Naive thymus-derived CD8-positive, alpha-beta T cell (primary cell): ENCODE measurements at regions of chr6 and their contacts with region 1.

Region 1: GRCh38 chr6:2988426-2989331 is 11.0 kb upstream of the NQO2 start:
- DNase-seq: peak; percentile 67 to 88 (median 80)
- ATAC-seq: peak; percentile 73
- H3K4me3 Mint-ChIP-seq: peak overlapping the region; percentile 82 to 99 (median 96)
- H3K27ac Mint-ChIP-seq: peak overlapping the region; percentile 98 to 100 (median 100)
- H3K4me1 Mint-ChIP-seq: peaks cover 14 to 31% (median 28%) of the 10 kb centered on the region in 4 donors
- H3K27me3 Mint-ChIP-seq: no peaks in the 10 kb centered on the region

Region 2: DNA sequence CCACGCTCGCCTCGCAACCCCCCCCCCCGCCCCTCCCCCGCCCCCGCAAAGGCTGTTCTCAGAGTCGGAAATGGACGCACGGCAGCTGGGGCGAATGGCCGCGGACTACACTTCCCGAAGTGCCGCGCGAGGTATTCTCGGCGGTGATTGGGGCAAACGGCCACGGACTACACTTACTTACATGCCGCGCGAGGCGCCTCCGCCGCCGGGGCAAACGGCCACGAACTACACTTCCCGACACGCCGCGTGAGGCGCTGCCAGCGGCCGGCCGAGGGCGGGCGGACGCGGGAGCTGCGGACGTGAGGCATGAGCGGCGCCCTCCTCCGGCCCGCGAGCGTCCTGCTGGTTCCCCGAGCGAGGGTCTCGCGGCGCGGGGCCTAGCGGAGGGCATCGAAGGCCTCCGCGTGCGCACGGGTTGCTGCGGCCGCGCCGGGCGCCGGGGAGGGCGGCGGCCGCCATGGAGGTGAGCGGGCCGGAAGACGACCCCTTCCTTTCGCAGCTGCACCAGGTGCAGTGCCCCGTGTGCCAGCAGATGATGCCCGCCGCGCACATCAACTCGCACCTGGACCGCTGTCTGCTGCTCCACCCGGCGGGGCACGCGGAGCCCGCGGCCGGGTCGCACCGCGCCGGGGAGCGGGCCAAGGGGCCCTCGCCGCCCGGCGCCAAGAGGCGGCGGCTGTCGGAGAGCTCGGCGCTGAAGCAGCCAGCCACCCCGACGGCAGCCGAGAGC is 223.3 kb before region 1 on chr6 and contains the start of gene WRNIP1:
- POLR2A ChIA-PET with region 1: interaction called, 38 read pairs
- DNase-seq: peak; percentile 90 to 99 (median 97)
- ATAC-seq: peak; percentile 83 to 86
- H3K4me3 Mint-ChIP-seq: peak within 1 kb of the TSS; percentile 88 to 97 (median 95)
- H3K27ac Mint-ChIP-seq: peak within 1 kb of the TSS; percentile 94 to 100 (median 98)
- H3K4me1 Mint-ChIP-seq: peaks cover 19 to 56% (median 52%) of the 10 kb centered on the region in 4 donors
- H3K27me3 Mint-ChIP-seq: no peaks in the 10 kb centered on the region
- polyA plus RNA-seq, gene WRNIP1: 33.1 to 61.0 (median 36.3) TPM

Region 3: GRCh38 chr6:2848851-2849250 is 139.8 kb before region 1 on chr6:
- POLR2A ChIA-PET with region 1: interaction called, 76 read pairs
- DNase-seq: peak; percentile 36 to 88 (median 68)
- ATAC-seq: peak; percentile 87 to 97
- H3K4me3 Mint-ChIP-seq: peak overlapping the region in 9 of 10 donors; percentile 16 to 77 (median 69)
- H3K27ac Mint-ChIP-seq: peak overlapping the region; percentile 61 to 98 (median 95)
- H3K4me1 Mint-ChIP-seq: peaks cover 20 to 52% (median 44%) of the 10 kb centered on the region in 4 donors
- H3K27me3 Mint-ChIP-seq: no peaks in the 10 kb centered on the region

Region 4: GRCh38 chr6:2931970-2932748 is 56.5 kb before region 1 on chr6:
- POLR2A ChIA-PET with region 1: interaction called, 497 read pairs
- DNase-seq: peak; percentile 61 to 91 (median 84)
- ATAC-seq: peak; percentile 77
- H3K4me3 Mint-ChIP-seq: peak overlapping the region; percentile 40 to 68 (median 51)
- H3K27ac Mint-ChIP-seq: peak overlapping the region in 9 of 10 donors; percentile 1 to 78 (median 56)
- H3K4me1 Mint-ChIP-seq: peaks cover 16 to 32% (median 24%) of the 10 kb centered on the region in 4 donors
- H3K27me3 Mint-ChIP-seq: no peaks in the 10 kb centered on the region

Region 5: DNA sequence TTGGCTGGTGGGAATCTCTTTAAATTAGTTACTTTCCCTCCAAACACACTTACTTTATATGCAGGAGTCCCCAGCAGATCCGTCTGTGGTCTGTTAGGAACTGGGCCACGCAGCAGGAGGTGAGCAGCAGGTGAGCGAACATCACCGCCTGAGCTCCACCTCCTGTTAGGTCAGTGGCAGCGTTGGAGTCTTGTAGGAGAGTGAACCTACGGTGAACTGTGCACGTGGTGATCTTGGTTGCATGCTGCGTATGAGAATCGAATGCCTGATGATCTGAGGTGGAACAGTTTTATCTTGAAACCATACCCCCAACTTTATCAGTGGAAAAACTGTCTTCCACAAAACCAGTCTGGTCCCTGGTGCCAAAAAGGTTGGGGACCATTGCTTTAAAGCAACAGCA is 22.3 kb before region 1 on chr6:
- POLR2A ChIA-PET with region 1: interaction called, 112 read pairs
- DNase-seq: no peak
- ATAC-seq: no peak
- H3K4me3 Mint-ChIP-seq: peak overlapping the region in 1 of 10 donors; percentile 12
- H3K27ac Mint-ChIP-seq: peak overlapping the region in 8 of 10 donors; percentile 10 to 91 (median 45)
- H3K4me1 Mint-ChIP-seq: peaks cover 36 to 74% (median 43%) of the 10 kb centered on the region in 4 donors
- H3K27me3 Mint-ChIP-seq: peaks cover 0 to 1% (median 0%) of the 10 kb centered on the region in 5 donors

Region 6: DNA sequence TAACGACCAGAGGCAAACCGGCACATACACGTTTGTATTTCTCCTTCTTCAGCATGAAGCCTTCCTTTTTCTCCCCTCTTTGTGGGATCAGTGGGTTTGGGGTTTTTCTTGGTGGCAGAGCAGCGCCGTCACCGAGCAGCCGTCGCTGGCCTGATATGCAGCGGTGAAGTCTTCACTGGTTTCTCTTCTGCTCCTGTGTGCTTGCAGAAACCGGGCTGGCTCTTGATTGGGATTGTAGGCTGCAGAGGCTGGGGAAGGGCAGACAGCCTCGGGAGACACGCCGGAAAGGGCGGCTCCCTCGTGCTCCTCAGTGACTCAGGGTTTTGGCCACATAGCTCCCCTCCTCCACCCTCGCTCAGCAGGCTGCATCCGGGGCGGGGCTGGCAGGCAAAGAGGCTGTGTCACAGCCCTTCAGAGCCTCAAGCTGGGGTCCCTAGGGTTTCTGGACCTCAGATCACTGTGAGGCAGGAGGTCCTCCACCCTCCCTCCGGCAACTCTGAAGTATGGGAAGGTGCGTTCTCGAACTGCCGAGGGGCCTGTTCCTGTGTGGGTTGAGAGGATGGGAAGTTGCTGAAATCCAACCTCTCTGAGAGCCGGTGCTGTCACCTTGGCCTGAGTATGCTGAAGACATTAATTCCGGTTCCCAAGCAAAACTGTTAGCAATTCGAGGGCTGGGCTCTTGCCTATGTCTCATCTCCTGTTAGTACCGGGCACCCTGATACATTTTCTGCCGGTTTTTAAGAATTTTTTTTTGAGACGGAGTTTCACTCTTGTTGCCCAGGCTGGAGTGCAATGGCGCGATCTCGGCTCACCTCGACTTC is 35.2 kb after region 1 on chr6:
- POLR2A ChIA-PET with region 1: interaction called, 19 read pairs
- DNase-seq: peak; percentile 61 to 86 (median 68)
- ATAC-seq: peak; percentile 79 to 83
- H3K4me3 Mint-ChIP-seq: peak overlapping the region; percentile 78 to 97 (median 90)
- H3K27ac Mint-ChIP-seq: peak overlapping the region; percentile 14 to 91 (median 83)
- H3K4me1 Mint-ChIP-seq: peaks cover 23 to 57% (median 54%) of the 10 kb centered on the region in 4 donors
- H3K27me3 Mint-ChIP-seq: no peaks in the 10 kb centered on the region